Posterior cingulate gyrus (tissue), 11 donors: ENCODE measurements at regions of chr19 and their contacts with region 1.

Region 1: DNA sequence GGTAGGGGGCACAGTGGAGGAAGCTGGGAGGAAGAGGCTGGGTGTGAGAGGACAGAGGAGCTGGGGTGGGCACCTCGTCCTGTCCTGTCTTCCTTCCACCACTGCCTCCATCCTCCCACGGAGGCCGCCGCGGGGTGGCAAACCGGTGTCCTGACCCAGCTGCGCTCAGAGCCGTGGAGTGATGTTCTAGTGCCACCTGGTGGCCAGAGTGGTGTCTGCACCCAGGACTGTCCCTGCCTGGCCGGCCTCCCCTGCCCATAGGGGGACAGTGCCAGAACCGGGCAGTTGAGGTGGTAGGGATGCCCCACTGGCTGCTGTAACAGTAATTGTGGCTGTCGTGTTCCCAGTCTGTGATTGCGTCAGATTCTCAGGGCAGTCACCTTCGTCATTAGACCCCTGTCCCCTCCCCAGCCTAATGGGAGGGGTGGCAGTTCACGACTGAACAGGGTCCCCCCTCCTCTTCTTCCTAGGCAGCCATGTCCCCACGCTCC is 11.1 kb upstream of the ARRDC2 start:
- DNase-seq: peak; percentile 77 to 97 (median 90)

Region 2: DNA sequence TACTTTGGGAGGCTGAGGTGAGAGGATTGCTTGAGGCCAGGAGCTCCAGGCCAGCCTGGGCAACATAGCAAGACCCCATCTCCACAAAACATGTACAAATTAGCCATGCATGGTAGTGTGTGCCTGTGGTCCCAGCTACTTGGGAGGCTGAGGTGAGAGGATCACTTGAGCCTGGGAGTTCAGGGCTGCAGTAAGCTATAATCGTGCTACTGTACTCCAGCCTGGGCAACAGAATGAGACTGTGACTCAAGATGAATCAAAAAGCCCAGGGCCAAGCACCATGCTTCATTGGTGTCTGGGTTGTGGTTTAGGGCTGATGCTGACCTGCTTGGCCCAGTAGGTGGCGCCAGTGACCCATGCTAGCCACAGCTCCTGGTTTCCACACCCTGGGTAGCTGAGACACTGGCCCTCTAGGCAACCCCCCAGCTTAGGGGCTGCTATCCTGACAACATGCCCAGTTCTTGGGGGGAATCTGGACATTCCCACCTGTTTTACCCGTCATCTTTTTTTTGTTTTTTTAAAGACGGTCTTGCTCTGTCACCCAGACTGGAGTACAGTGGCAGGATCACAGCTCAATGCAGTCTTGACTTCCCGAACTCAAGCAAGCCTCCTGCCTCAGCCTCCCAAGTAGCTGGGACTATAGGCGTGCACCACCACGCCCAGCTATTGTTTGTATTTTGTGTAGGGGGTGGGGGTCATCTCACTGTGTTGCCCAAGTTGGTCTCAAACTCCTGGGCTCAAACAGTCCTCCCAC is 58.6 kb before region 1 on chr19:
- intact Hi-C with region 1: loop called (anchors 1 kb)
- DNase-seq: peak; percentile 65 to 96 (median 84)

Region 3: DNA sequence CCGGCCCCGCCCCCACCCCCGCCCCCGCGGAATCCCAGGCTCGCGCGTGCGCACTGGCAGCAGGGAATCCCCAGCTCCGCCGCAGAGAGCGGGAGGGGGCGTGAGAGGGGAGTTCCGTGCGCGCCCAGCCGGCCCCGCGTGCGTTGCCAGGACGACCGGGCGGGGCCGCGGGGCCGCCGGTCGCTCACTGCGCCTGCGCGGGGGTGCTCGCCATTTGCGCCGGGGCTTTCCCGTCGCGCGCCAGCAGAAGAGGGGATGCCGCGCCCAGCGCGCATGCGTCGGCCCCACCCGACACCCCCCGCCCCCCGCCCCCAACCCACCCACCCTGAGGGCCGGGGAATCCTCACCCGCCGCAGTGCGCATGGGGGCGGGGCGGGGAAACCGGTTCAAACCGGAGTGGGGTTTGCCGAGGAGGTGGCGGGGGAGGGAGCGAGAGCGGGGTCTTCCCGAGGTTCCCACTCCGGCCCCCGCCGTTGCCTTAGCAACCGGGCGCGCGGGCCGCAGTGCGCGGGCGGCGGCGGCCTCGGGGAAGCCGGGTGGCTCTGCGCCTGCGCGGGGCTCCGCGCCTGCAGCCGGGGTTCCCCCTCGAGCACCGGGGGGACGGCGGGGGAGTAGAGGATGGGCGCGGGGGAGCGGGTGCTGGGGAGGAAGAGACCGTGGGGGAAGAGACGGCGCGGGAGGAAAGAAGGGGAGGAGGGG is 48.9 kb before region 1 on chr19:
- intact Hi-C with region 1: loop called (anchors 2 kb)
- DNase-seq: peak; percentile 77 to 98 (median 86)

Region 4: GRCh38 chr19:17985037-17985818 is 11.6 kb before region 1 on chr19:
- intact Hi-C with region 1: no loop called
- DNase-seq: no peak